ENCODE measurements at regions of chr6 and their contacts with region 1.

Region 1: DNA sequence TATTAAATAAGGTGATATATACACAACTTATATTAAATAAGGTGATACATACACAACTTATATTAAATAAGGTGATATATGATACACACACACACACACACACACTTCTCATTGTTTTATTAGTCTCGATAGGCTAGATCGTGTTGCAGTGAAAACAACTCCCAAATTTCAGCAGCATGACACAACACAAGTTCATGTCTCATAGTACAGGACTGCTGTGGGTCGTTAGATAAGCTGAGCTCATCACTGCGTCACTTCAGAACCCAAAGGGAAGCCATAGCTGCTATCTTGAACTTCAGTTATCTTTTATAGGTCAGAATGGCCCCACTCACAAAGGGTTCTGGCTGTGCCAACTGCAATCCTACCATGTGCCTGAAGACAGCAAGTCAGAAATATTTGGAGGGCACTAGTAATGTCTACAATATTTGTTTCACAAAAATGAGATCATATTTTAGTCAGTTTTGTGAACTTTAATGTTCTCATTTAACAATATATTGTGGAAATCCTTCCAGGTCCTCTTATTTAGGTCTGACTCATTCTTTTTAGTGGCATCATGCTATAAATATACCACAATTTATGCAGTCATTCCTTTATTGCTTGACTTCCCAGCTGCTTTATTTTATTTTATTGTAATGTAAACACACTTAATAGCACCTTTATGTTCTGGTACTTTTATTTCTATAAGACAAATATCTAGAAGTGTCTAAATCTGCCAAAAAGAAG is 290.2 kb downstream of the PHACTR1 start:
- DNase-seq: no peak
- ATAC-seq: peak; percentile 87

Region 2: GRCh38 chr6:12899046-12899833 is 107.5 kb before region 1 on chr6:
- intact Hi-C with region 1: no loop called
- DNase-seq: no peak
- ATAC-seq: no peak

Region 3: GRCh38 chr6:12962987-12963386 is 43.8 kb before region 1 on chr6:
- intact Hi-C with region 1: loop called (anchors 5 kb)
- DNase-seq: no peak
- ATAC-seq: peak; percentile 28